ENCODE measurements at regions of chr10 and their contacts with region 1.

Region 1: GRCh38 chr10:31031558-31032257 is at the start of gene ZNF438:
- DNase-seq: peak; percentile 89 to 98 (median 94)
- ATAC-seq: peak; percentile 77
- H3K4me3 ChIP-seq: peak within 1 kb of the TSS; percentile 74
- H3K4me3 Mint-ChIP-seq: peak within 1 kb of the TSS; percentile 95
- H3K27ac ChIP-seq: peak within 1 kb of the TSS; percentile 91 to 99
- H3K27ac Mint-ChIP-seq: peak within 1 kb of the TSS; percentile 100
- H3K4me1 ChIP-seq: peaks cover 22% of the 10 kb centered on the region
- H3K4me1 Mint-ChIP-seq: peaks cover 18% of the 10 kb centered on the region
- H3K27me3 ChIP-seq: no peaks in the 10 kb centered on the region
- H3K27me3 Mint-ChIP-seq: no peaks in the 10 kb centered on the region
- CTCF ChIP-seq: peak; percentile 74
- total RNA-seq, gene ZNF438: 1.9 to 2.0 TPM

Region 2: GRCh38 chr10:30359373-30360206 is 672.1 kb before region 1 on chr10:
- CTCF ChIA-PET with region 1: no interaction called
- POLR2A ChIA-PET with region 1: no interaction called
- intact Hi-C with region 1: loop called in 1 of 2 experiments (anchors 10 kb)
- DNase-seq: peak; percentile 29 to 79 (median 44)
- ATAC-seq: peak; percentile 80
- H3K4me3 ChIP-seq: no peak overlapping the region
- H3K4me3 Mint-ChIP-seq: no peak overlapping the region
- H3K27ac ChIP-seq: no peak overlapping the region
- H3K27ac Mint-ChIP-seq: no peak overlapping the region
- H3K4me1 ChIP-seq: peaks cover 6% of the 10 kb centered on the region
- H3K4me1 Mint-ChIP-seq: peaks cover 5% of the 10 kb centered on the region
- H3K27me3 ChIP-seq: no peaks in the 10 kb centered on the region
- H3K27me3 Mint-ChIP-seq: peaks cover 12% of the 10 kb centered on the region
- CTCF ChIP-seq: peak; percentile 66

Region 3: DNA sequence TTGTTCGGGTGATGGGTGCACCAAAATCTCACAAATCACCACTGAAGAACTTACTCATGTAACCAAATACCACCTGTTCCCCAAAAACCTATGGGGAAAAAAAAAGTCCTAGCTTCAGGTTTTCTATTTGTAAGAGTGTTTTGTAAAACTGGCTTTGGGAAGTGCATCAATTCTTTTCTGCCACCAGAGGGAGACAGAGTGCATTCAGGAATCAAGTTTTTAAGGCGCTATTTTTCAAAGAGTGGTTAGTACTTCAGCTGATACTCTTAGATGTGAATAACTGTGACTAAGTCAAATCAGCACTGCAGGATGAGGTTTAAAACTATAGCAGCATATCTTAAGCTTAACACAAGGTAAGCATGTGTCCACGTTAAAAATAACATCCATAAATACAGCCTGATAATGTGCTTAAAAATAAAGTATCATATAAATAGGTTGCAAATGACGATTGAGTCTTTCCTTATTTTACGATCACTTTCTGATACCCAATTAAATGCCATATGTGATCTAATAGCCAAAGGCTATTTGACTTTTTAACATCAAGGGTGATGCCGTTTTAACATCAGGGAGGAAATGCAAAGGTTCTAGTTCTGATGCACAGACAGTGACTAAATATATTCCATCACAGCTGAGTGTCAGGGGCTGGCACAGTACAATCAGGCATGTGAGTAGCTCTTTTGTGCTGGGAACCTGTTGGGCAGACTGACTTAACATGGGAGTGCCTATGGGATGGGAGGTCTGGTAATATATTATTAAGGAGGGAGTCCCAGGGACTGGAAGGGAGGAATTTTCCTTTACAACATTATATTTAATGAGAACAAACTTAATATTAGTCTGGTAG is 391.5 kb before region 1 on chr10:
- CTCF ChIA-PET with region 1: no interaction called
- POLR2A ChIA-PET with region 1: no interaction called
- intact Hi-C with region 1: no loop called
- DNase-seq: peak in 4 of 14 experiments; percentile 21 to 75 (median 53)
- ATAC-seq: peak; percentile 69
- H3K4me3 ChIP-seq: no peak overlapping the region
- H3K4me3 Mint-ChIP-seq: no peak overlapping the region
- H3K27ac ChIP-seq: no peak overlapping the region
- H3K27ac Mint-ChIP-seq: no peak overlapping the region
- H3K4me1 ChIP-seq: no peaks in the 10 kb centered on the region
- H3K4me1 Mint-ChIP-seq: no peaks in the 10 kb centered on the region
- H3K27me3 ChIP-seq: peaks cover 2 to 9% of the 10 kb centered on the region in 2 experiments
- H3K27me3 Mint-ChIP-seq: peaks cover 52% of the 10 kb centered on the region
- CTCF ChIP-seq: peak; percentile 91

Region 4: GRCh38 chr10:30783939-30784500 is 247.7 kb before region 1 on chr10:
- CTCF ChIA-PET with region 1: interaction called, 3 read pairs
- POLR2A ChIA-PET with region 1: interaction called, 66 read pairs
- intact Hi-C with region 1: loop called in 1 of 2 experiments (anchors 1 kb)
- DNase-seq: peak; percentile 73 to 91 (median 82)
- ATAC-seq: peak; percentile 91
- H3K4me3 ChIP-seq: peak overlapping the region; percentile 48
- H3K4me3 Mint-ChIP-seq: peak overlapping the region; percentile 82
- H3K27ac ChIP-seq: peak overlapping the region; percentile 7 to 40
- H3K27ac Mint-ChIP-seq: peak overlapping the region; percentile 62
- H3K4me1 ChIP-seq: peaks cover 18% of the 10 kb centered on the region
- H3K4me1 Mint-ChIP-seq: peaks cover 26% of the 10 kb centered on the region
- H3K27me3 ChIP-seq: no peaks in the 10 kb centered on the region
- H3K27me3 Mint-ChIP-seq: no peaks in the 10 kb centered on the region
- CTCF ChIP-seq: peak; percentile 75

Region 5: GRCh38 chr10:31083765-31084184 is 52.1 kb after region 1 on chr10:
- CTCF ChIA-PET with region 1: interaction called, 3 read pairs
- POLR2A ChIA-PET with region 1: interaction called, 3 read pairs
- intact Hi-C with region 1: loop called in 1 of 2 experiments (anchors 2 kb)
- DNase-seq: peak; percentile 26 to 75 (median 33)
- ATAC-seq: peak; percentile 63
- H3K4me3 ChIP-seq: no peak overlapping the region
- H3K4me3 Mint-ChIP-seq: no peak overlapping the region
- H3K27ac ChIP-seq: no peak overlapping the region
- H3K27ac Mint-ChIP-seq: no peak overlapping the region
- H3K4me1 ChIP-seq: peaks cover 5% of the 10 kb centered on the region
- H3K4me1 Mint-ChIP-seq: peaks cover 4% of the 10 kb centered on the region
- H3K27me3 ChIP-seq: no peaks in the 10 kb centered on the region
- H3K27me3 Mint-ChIP-seq: no peaks in the 10 kb centered on the region
- CTCF ChIP-seq: peak; percentile 51

Region 6: DNA sequence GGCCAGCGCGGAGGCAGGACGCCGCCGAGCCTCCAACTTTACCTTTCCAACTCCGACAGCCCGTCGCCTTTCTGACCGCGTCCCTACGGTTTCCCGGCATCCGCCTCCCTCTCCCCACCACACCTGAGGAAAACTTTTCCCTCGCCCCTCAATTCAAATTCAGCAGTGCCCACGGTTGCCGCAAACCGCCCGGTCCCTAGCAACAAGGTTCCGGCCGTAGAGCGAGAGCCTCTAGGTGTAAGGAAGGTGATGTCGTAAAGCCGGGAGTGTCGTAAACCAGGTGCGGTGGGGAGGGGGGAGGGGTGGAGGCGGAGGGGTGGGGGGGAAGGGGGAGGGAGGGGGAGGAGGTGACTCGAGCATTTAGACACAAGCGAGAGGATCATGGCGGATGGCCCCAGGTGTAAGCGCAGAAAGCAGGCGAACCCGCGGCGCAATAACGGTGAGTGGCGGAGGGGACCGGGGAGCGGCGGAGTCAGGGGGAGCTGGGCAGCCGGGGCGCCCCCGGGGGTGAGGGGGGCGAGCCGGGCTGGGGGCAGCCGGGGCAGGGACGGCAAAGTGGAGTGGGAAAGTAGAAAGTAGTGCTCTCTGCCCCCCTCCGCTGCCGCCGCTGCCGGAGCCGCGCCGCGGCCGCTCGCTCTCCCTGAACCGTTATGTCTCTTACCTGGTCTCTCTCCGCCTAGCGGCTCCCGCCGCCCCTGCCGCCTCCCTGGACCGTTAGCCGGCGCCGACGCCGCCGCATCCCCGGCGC is 287.3 kb after region 1 on chr10 and contains the start of gene ZEB1:
- CTCF ChIA-PET with region 1: interaction called, 3 read pairs
- POLR2A ChIA-PET with region 1: interaction called, 27 read pairs
- intact Hi-C with region 1: loop called (anchors 1 to 2 kb)
- DNase-seq: peak; percentile 78 to 97 (median 88)
- ATAC-seq: peak; percentile 40
- H3K4me3 ChIP-seq: peak within 1 kb of the TSS; percentile 81
- H3K4me3 Mint-ChIP-seq: peak within 1 kb of the TSS; percentile 98
- H3K27ac ChIP-seq: peak within 1 kb of the TSS; percentile 80 to 98
- H3K27ac Mint-ChIP-seq: peak within 1 kb of the TSS; percentile 94
- H3K4me1 ChIP-seq: peaks cover 10% of the 10 kb centered on the region
- H3K4me1 Mint-ChIP-seq: peaks cover 45% of the 10 kb centered on the region
- H3K27me3 ChIP-seq: no peaks in the 10 kb centered on the region
- H3K27me3 Mint-ChIP-seq: no peaks in the 10 kb centered on the region
- CTCF ChIP-seq: peak; percentile 33
- total RNA-seq, gene ZEB1: 132 to 134 TPM

Region 7: DNA sequence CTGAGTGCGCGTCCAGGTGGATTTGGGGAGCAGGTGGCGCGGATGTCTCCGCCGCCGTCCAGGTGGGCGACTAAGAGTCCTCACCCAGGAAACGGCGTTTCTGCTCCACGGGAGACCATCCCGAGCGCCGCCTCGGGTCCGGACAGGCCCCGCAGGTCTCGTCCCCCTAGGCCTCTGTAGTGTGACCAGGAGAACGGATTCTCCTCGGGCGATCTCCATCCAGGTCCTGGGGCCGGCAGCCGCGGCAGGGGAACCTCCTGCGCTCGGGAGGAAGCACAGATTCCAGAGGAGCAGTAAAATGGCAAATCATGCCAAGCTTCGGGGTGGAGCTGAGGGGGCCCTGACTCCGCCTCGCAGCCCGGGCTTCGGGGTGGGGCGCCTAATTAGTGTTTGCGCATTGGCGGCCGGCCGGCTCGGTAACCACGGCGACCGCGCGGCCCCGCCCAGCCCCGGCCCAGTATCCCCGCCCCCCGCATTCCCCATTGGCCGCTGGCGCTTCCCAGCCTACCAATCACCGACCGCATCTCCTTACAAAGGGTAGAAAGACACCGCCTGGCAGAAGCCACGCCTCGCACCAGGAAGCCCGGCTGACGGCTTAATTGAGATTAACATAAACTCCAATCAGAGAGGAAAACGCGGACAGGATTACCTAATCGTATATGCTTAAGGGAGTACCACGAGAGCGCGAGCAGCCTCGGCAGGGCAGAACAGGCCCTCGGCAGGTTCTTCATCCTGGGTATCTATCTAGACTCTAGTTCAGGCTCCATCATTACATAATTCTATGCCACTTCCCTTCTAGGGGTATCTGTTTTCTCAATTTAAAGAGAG is 728.3 kb after region 1 on chr10:
- CTCF ChIA-PET with region 1: interaction called, 3 read pairs
- POLR2A ChIA-PET with region 1: interaction called, 21 read pairs
- intact Hi-C with region 1: loop called (anchors 2 kb)
- DNase-seq: peak; percentile 90 to 99 (median 94)
- ATAC-seq: peak; percentile 92
- H3K4me3 ChIP-seq: peak overlapping the region; percentile 99
- H3K4me3 Mint-ChIP-seq: peak overlapping the region; percentile 88
- H3K27ac ChIP-seq: peak overlapping the region; percentile 87 to 92
- H3K27ac Mint-ChIP-seq: peak overlapping the region; percentile 96
- H3K4me1 ChIP-seq: peaks cover 19% of the 10 kb centered on the region
- H3K4me1 Mint-ChIP-seq: peaks cover 19% of the 10 kb centered on the region
- H3K27me3 ChIP-seq: no peaks in the 10 kb centered on the region
- H3K27me3 Mint-ChIP-seq: no peaks in the 10 kb centered on the region
- CTCF ChIP-seq: no peak

Region 8: GRCh38 chr10:32055813-32056600 is 1024.3 kb after region 1 on chr10 and contains the start of gene KIF5B:
- CTCF ChIA-PET with region 1: no interaction called
- POLR2A ChIA-PET with region 1: interaction called, 3 read pairs
- intact Hi-C with region 1: loop called in 1 of 2 experiments (anchors 5 kb)
- DNase-seq: peak; percentile 74 to 95 (median 84)
- ATAC-seq: peak; percentile 79
- H3K4me3 ChIP-seq: peak within 1 kb of the TSS; percentile 98
- H3K4me3 Mint-ChIP-seq: peak within 1 kb of the TSS; percentile 95
- H3K27ac ChIP-seq: peak within 1 kb of the TSS; percentile 77 to 92
- H3K27ac Mint-ChIP-seq: peak within 1 kb of the TSS; percentile 95
- H3K4me1 ChIP-seq: peaks cover 18% of the 10 kb centered on the region
- H3K4me1 Mint-ChIP-seq: peaks cover 54% of the 10 kb centered on the region
- H3K27me3 ChIP-seq: no peaks in the 10 kb centered on the region
- H3K27me3 Mint-ChIP-seq: no peaks in the 10 kb centered on the region
- CTCF ChIP-seq: no peak
- total RNA-seq, gene KIF5B: 58.3 to 59.0 TPM